ENCODE measurements at regions of chr1 and their contacts with region 1.

Region 1: DNA sequence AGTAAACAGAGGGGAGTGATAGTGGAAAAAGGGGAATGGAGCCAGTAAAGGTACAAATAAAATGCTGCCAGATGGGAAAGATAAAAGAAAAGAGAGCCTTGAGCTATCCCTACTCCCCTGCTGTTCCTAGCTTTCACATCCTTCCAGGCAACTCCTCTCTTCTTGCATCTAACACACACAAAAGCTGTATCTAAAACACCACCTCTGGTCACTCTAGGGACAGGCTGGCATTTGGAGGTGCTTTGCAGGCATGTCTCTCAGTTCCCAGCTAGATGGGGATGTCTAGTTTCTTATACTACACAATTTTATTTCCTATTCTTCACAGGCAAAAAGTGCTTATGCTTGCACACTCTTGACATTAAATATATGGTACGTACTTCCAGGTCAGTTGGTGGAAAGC is 185.1 kb upstream of the ST6GALNAC5 start:
- DNase-seq: no peak

Region 2: GRCh38 chr1:75079538-75080290 is 1602.4 kb before region 1 on chr1:
- intact Hi-C with region 1: loop called in 1 of 2 experiments (anchors 5 kb)
- DNase-seq: no peak